ENCODE measurements at regions of chr11 and their contacts with region 1.

Region 1: GRCh38 chr11:96342961-96343711 is at the start of gene MAML2:
- DNase-seq: peak; percentile 72
- ATAC-seq: peak; percentile 88
- H3K4me3 Mint-ChIP-seq: peak within 1 kb of the TSS; percentile 98
- H3K27ac Mint-ChIP-seq: peak within 1 kb of the TSS; percentile 95
- H3K4me1 Mint-ChIP-seq: peaks cover 50% of the 10 kb centered on the region
- H3K27me3 Mint-ChIP-seq: no peaks in the 10 kb centered on the region
- CTCF ChIP-seq: no peak
- total RNA-seq, gene MAML2: 20.9 and 24.8 TPM in 2 replicates

Region 2: GRCh38 chr11:95835768-95836488 is 507.2 kb before region 1 on chr11:
- CTCF ChIA-PET with region 1: interaction called, 32 read pairs
- POLR2A ChIA-PET with region 1: no interaction called
- intact Hi-C with region 1: loop called (anchors 1 kb)
- DNase-seq: no peak
- ATAC-seq: peak; percentile 87
- H3K4me3 Mint-ChIP-seq: no peak overlapping the region
- H3K27ac Mint-ChIP-seq: no peak overlapping the region
- H3K4me1 Mint-ChIP-seq: peaks cover 2% of the 10 kb centered on the region
- H3K27me3 Mint-ChIP-seq: no peaks in the 10 kb centered on the region
- CTCF ChIP-seq: no peak

Region 3: DNA sequence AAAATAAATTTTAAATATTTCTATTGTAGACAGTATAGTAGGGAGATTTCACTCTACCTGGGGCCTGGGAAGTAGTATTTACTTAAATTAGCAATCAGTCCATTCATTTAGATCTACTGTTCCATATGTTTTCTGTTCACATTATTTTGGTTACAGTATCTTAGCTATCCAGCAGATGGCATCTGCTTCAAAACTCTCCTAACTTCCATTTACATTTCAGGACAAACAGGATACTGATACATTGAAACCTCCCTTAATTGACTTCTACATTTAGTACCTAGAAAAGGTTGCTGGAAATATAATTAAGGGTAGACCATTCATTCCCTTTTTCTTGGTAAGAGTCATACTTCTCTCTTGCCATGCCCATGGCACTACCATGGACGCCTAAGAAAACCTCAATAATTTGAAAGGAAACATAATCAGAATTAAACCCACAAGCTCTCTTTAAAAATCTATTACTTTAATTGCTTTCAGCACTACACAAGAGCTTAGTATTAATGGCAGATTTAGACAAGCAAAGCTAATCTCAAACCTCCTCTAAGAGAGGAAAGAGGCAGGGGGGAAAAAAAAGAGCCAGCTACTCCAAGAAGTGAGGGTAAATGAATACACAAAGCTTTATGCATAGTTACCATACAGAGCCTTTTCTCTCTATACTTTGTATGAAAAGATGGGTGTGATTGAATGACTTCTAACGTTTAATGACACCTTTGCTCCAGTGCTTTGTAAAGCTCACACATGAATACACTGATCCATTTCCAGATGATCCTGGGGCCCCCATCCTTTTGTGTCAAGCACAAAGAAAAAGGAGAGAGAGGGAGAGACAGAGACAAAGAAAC is 288.0 kb before region 1 on chr11:
- CTCF ChIA-PET with region 1: interaction called, 116 read pairs
- POLR2A ChIA-PET with region 1: interaction called, 12 read pairs
- intact Hi-C with region 1: loop called (anchors 1 kb)
- DNase-seq: no peak
- ATAC-seq: no peak
- H3K4me3 Mint-ChIP-seq: no peak overlapping the region
- H3K27ac Mint-ChIP-seq: peak overlapping the region; percentile 15
- H3K4me1 Mint-ChIP-seq: peaks cover 19% of the 10 kb centered on the region
- H3K27me3 Mint-ChIP-seq: no peaks in the 10 kb centered on the region
- CTCF ChIP-seq: peak; percentile 75

Region 4: GRCh38 chr11:96188243-96189006 is 154.7 kb before region 1 on chr11:
- CTCF ChIA-PET with region 1: interaction called, 8 read pairs
- POLR2A ChIA-PET with region 1: interaction called, 4 read pairs
- intact Hi-C with region 1: loop called (anchors 2 kb)
- DNase-seq: no peak
- ATAC-seq: peak; percentile 25
- H3K4me3 Mint-ChIP-seq: peak overlapping the region; percentile 39
- H3K27ac Mint-ChIP-seq: peak overlapping the region; percentile 57
- H3K4me1 Mint-ChIP-seq: peaks cover 69% of the 10 kb centered on the region
- H3K27me3 Mint-ChIP-seq: no peaks in the 10 kb centered on the region
- CTCF ChIP-seq: no peak

Region 5: GRCh38 chr11:96254087-96254486 is 89.0 kb before region 1 on chr11:
- CTCF ChIA-PET with region 1: interaction called, 21 read pairs
- POLR2A ChIA-PET with region 1: interaction called, 14 read pairs
- intact Hi-C with region 1: loop called (anchors 1 kb)
- DNase-seq: no peak
- ATAC-seq: no peak
- H3K4me3 Mint-ChIP-seq: peak overlapping the region; percentile 73
- H3K27ac Mint-ChIP-seq: peak overlapping the region; percentile 99
- H3K4me1 Mint-ChIP-seq: peaks cover 82% of the 10 kb centered on the region
- H3K27me3 Mint-ChIP-seq: no peaks in the 10 kb centered on the region
- CTCF ChIP-seq: no peak

Region 6: DNA sequence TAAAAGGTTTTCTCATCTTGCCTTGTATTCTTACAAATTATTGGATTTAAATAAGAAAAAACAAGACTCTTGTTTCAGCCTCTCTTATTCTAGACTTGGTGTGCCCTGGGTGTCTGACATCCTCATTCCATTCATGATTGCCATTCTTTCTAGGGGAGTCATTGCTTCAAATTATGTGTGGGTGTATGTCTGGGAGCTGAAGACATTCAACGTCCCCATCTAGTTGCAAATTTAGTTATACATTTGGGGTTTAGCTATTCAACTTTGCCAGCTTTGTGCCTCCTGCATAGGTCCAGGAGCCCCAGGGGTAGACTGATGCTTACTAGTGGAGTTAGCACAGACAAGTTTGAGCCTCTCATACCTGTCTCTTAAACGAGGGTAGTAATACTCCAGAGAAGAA is 18.2 kb before region 1 on chr11:
- CTCF ChIA-PET with region 1: interaction called, 5 read pairs
- POLR2A ChIA-PET with region 1: no interaction called
- intact Hi-C with region 1: loop called (anchors 2 kb)
- DNase-seq: no peak
- ATAC-seq: no peak
- H3K4me3 Mint-ChIP-seq: no peak overlapping the region
- H3K27ac Mint-ChIP-seq: no peak overlapping the region
- H3K4me1 Mint-ChIP-seq: peaks cover 25% of the 10 kb centered on the region
- H3K27me3 Mint-ChIP-seq: no peaks in the 10 kb centered on the region
- CTCF ChIP-seq: no peak

Measured in activated B cell treated with CpG ODN at 0.5 μM for 24 hours (primary cell).